Activated naive CD4-positive, alpha-beta T cell treated with anti-CD3 and anti-CD28 coated beads, Interleukin-2, amount 10 ng/mL, durations not matched to agents 7 days and 5 days (primary cell): ENCODE measurements at regions of chr20 and their contacts with region 1.

Region 1: GRCh38 chr20:31661625-31662371 is 24.1 kb downstream of the COX4I2 start:
- DNase-seq: peak; percentile 84
- H3K4me3 Mint-ChIP-seq: peak overlapping the region; percentile 73
- H3K27ac Mint-ChIP-seq: peak overlapping the region; percentile 89
- H3K4me1 Mint-ChIP-seq: peaks cover 57% of the 10 kb centered on the region
- H3K27me3 Mint-ChIP-seq: no peaks in the 10 kb centered on the region

Region 2: GRCh38 chr20:31430568-31431115 is 231.2 kb before region 1 on chr20:
- CTCF ChIA-PET with region 1: no interaction called
- DNase-seq: no peak
- H3K4me3 Mint-ChIP-seq: no peak overlapping the region
- H3K27ac Mint-ChIP-seq: no peak overlapping the region
- H3K4me1 Mint-ChIP-seq: no peaks in the 10 kb centered on the region
- H3K27me3 Mint-ChIP-seq: no peaks in the 10 kb centered on the region

Region 3: GRCh38 chr20:31633339-31633914 is 28.4 kb before region 1 on chr20:
- CTCF ChIA-PET with region 1: interaction called, 34 read pairs
- DNase-seq: no peak
- H3K4me3 Mint-ChIP-seq: no peak overlapping the region
- H3K27ac Mint-ChIP-seq: no peak overlapping the region
- H3K4me1 Mint-ChIP-seq: no peaks in the 10 kb centered on the region
- H3K27me3 Mint-ChIP-seq: peaks cover 16% of the 10 kb centered on the region

Region 4: GRCh38 chr20:31674895-31675827 is 13.4 kb after region 1 on chr20:
- CTCF ChIA-PET with region 1: interaction called, 95 read pairs
- DNase-seq: peak; percentile 84
- H3K4me3 Mint-ChIP-seq: peak overlapping the region; percentile 88
- H3K27ac Mint-ChIP-seq: peak overlapping the region; percentile 98
- H3K4me1 Mint-ChIP-seq: peaks cover 89% of the 10 kb centered on the region
- H3K27me3 Mint-ChIP-seq: no peaks in the 10 kb centered on the region

Region 5: GRCh38 chr20:31684153-31685015 is 22.6 kb after region 1 on chr20:
- CTCF ChIA-PET with region 1: interaction called, 95 read pairs
- DNase-seq: no peak
- H3K4me3 Mint-ChIP-seq: no peak overlapping the region
- H3K27ac Mint-ChIP-seq: peak overlapping the region; percentile 82
- H3K4me1 Mint-ChIP-seq: peaks cover 85% of the 10 kb centered on the region
- H3K27me3 Mint-ChIP-seq: no peaks in the 10 kb centered on the region

Region 6: DNA sequence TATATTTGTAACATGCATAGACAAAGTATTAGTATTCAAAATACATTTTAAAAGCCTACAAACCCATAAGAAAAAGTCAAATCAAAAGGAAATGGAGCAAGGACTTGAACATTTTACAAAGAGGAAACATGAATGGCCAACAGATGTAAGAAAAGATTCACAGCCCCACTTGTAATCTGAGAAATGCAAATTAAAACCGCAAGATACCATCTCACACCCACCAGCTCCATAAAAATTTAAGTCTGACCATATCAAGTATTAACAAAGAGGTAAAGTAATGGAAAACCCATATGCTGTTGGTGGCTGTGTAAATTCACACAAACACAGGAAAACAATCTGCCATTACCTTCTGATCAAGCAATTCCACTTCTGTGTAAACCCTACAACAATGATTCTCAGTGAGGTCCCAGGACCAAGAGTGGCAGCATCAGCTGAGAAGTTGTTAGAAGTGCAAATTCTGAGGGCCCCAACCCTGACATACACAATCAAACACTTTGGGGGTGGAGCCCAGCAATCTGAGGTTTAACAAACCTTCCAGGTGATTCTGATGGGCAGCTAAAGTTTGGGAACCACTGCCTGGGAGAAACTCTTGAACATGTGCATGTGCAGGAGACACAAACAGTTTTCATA is 30.0 kb after region 1 on chr20:
- CTCF ChIA-PET with region 1: interaction called, 46 read pairs
- DNase-seq: no peak
- H3K4me3 Mint-ChIP-seq: no peak overlapping the region
- H3K27ac Mint-ChIP-seq: peak overlapping the region; percentile 86
- H3K4me1 Mint-ChIP-seq: peaks cover 61% of the 10 kb centered on the region
- H3K27me3 Mint-ChIP-seq: no peaks in the 10 kb centered on the region

Region 7: DNA sequence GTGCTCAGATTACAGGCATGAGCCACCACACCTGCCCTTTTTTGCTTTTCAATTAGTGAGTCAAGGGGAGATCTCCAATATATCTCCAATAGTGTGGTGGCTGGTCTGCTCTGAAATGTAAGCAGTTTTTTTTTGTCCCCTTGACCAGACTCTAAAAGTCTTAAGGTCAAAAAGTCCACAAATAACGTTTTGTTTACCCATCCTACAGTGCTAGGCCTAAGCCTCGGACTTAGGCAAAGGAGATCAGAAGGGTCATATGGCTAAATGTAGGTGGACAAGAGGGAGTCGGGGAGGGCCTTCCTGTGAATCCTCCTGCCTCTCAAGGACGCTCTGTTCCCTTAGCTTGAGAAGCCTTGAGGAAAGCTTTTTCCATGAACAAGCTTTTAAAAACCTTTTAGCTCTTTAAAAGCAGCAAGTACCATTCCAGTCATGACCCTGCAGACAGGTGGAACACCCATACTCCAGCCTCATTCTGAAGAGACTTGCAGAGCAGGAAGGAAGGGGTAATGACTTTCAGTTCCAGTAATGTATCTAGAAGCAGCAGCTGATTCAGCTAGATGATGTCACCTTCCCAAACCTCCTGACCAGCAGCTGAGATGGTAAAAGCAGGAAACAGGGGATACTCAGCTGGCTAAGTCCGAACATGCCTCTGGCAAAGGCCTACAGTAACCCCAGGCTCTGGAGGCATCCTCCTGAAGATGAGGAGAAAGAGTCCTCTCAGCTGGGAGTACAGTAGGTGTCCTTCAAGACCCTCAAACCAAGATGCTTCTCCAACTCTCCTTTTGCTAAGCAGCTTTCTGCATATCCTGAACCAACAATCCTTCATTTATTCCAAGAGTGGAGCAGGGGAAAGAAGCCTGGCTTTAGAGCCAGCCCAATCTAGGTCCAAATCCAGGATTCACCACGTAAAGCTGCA is 37.3 kb after region 1 on chr20:
- CTCF ChIA-PET with region 1: interaction called, 46 read pairs
- DNase-seq: peak; percentile 43
- H3K4me3 Mint-ChIP-seq: no peak overlapping the region
- H3K27ac Mint-ChIP-seq: peak overlapping the region; percentile 85
- H3K4me1 Mint-ChIP-seq: peaks cover 63% of the 10 kb centered on the region
- H3K27me3 Mint-ChIP-seq: no peaks in the 10 kb centered on the region

Region 8: DNA sequence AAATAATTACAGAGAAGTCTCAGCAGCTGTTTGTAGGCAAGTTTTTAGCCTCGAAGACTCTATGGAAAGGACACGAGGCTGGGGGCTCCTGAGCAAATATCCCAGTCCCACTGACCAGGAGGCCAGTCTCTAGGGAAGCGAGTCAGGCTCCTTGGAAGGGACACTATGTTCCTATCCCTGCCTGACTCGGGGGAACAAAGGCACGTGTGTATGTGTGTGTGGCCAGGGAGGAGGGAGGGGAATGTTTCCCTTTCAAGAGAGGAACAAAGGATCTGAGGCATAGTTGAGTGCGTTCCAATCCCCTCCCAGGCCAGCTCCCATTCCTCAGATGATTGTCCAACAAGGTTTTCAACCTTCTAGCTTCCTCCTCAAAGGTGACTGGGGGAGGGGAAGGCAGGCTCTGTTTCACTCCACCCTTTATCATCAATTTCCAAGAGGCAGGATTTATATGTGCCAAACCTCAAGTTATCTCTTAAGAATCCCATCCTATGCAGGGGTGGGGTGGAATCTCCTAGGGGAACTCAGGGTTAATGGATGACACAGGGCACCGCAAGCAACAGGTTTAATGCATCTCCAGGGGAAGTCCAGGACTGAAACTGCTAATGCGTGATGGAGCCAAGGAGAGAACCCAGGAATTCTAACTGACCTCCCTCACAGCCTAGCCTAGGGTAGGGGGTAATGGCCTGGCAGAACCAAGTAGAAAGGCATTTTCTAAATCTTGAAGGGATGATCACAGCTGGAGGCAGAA is 50.9 kb after region 1 on chr20:
- CTCF ChIA-PET with region 1: interaction called, 348 read pairs
- DNase-seq: no peak
- H3K4me3 Mint-ChIP-seq: no peak overlapping the region
- H3K27ac Mint-ChIP-seq: no peak overlapping the region
- H3K4me1 Mint-ChIP-seq: peaks cover 88% of the 10 kb centered on the region
- H3K27me3 Mint-ChIP-seq: no peaks in the 10 kb centered on the region

Region 9: DNA sequence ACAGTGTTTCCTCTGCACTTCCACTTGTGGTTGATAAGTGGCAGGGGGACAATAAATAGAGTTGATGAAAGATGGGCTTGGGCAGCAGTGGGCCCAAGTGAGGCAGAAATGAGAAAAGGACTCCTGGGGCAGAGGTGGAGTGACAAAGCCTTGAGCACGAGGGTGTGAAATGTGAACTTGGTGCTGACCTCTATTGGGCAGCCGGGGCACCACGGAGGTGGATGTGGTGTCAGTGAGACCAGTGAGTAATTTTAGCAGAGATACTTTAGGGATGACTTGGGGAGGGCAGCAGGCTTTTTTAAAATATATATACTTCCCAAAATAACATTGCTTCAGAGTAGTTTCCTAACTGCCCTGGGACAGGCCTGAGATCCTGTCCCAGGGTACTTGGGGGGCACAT is 126.8 kb after region 1 on chr20:
- CTCF ChIA-PET with region 1: no interaction called
- DNase-seq: no peak
- H3K4me3 Mint-ChIP-seq: no peak overlapping the region
- H3K27ac Mint-ChIP-seq: no peak overlapping the region
- H3K4me1 Mint-ChIP-seq: no peaks in the 10 kb centered on the region
- H3K27me3 Mint-ChIP-seq: no peaks in the 10 kb centered on the region

Region 10: GRCh38 chr20:31869942-31870725 is 208.3 kb after region 1 on chr20 and contains the starts of genes DUSP15 and TTLL9:
- CTCF ChIA-PET with region 1: no interaction called
- DNase-seq: no peak
- H3K4me3 Mint-ChIP-seq: peak within 1 kb of the TSS; percentile 59
- H3K27ac Mint-ChIP-seq: no peak within 1 kb of the TSS
- H3K4me1 Mint-ChIP-seq: peaks cover 12% of the 10 kb centered on the region
- H3K27me3 Mint-ChIP-seq: peaks cover 70% of the 10 kb centered on the region